MCF 10A (cell line): ENCODE measurements at regions of chr10 and their contacts with region 1.

Region 1: GRCh38 chr10:62244780-62245467 is 23.7 kb downstream of the RTKN2 start:
- DNase-seq: peak; percentile 83
- H3K4me3 Mint-ChIP-seq: peak overlapping the region; percentile 79
- H3K27ac Mint-ChIP-seq: no peak overlapping the region
- H3K4me1 Mint-ChIP-seq: peaks cover 20% of the 10 kb centered on the region
- H3K27me3 Mint-ChIP-seq: no peaks in the 10 kb centered on the region
- CTCF ChIP-seq: peak; percentile 53

Region 2: GRCh38 chr10:60816628-60817397 is 1428.1 kb before region 1 on chr10:
- CTCF ChIA-PET with region 1: no interaction called
- POLR2A ChIA-PET with region 1: no interaction called
- intact Hi-C with region 1: loop called (anchors 10 kb)
- DNase-seq: peak; percentile 81
- H3K4me3 Mint-ChIP-seq: no peak overlapping the region
- H3K27ac Mint-ChIP-seq: no peak overlapping the region
- H3K4me1 Mint-ChIP-seq: no peaks in the 10 kb centered on the region
- H3K27me3 Mint-ChIP-seq: no peaks in the 10 kb centered on the region
- CTCF ChIP-seq: peak; percentile 72

Region 3: DNA sequence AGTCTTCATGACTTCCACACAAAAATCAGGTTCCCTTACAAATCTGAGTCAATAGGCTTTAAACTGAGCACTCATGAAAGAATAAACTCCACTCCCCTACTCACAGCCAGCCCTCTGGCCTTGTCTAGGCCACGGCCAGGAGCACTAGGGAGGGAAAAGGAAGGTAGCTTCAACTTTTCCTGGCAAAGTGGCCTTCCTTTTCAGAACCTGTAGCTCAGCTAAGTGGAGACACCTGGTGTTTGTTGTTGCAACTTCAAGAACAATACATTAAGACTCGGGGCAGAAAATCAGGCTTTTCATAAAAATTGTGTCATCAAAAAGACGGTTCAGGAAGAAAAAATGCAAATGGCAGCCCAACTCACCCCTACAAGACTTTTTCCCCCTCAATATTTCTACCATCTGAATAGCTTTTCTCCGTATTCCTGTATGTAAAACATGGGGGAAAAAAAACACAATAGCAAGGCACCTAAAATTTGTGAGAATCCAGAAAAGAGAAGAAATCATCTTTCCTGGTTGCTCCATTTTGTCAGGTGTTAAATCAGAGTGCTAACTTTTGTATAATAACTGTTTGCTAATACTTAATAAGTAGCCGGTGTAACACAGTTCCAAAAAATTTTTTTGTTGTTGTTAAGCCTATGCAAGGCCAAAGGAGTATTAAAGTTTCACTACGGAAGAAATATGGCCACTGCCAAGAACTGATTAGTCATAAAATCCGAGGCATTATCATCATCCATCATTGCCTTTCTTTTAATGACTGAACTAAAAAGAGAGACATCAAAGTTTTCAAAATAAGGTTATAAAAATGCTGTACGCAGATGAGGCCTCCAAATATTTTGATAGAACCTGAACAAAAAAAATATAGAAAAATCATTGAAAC is 409.6 kb before region 1 on chr10:
- CTCF ChIA-PET with region 1: interaction called, 4 read pairs
- POLR2A ChIA-PET with region 1: no interaction called
- intact Hi-C with region 1: loop called (anchors 10 kb)
- DNase-seq: peak; percentile 70
- H3K4me3 Mint-ChIP-seq: no peak overlapping the region
- H3K27ac Mint-ChIP-seq: peak overlapping the region; percentile 83
- H3K4me1 Mint-ChIP-seq: peaks cover 31% of the 10 kb centered on the region
- H3K27me3 Mint-ChIP-seq: no peaks in the 10 kb centered on the region
- CTCF ChIP-seq: peak; percentile 50

Region 4: DNA sequence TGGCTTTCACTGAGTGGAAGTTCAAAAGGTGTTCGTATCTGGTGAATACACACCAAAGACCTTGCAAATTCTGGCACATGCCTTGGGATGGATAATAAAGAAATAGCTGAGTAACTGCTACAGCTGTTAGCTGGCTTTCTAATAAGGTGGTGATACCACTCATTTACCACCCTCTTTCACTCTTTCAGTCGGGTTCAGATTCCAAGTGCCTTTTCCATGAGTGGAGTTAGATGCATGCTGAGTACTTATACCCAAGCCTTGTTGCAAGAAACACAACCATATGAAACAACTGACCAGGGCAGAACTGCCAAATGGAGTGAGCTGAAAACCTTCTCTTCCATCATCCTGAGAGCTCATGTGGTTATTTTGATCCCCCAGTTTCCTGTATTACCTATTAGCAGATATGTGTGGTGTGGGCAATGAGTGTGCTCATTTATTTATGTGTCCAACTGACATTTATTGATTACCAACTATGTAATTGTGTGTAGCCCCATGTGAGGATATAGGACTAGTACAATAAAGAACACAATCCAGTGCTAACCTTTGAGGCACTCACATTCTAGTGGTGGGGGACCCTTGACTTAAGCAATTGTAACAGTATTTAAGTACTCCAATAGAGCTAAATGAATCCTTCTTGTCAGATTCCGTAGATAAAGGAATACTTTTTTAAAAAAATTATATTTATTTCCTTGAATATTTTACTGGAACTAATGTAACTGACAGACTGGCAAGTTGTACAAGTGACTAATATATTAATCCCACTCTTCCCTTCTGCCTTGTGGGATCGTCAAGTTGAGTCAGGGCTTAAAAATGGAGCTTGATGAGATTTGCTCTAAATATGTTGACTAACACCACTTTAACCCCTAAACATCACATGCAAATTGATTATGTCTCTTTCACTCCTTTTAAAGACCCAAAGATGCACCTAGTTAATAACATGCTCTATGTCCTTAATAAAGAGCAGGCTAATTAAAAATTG is 218.7 kb before region 1 on chr10:
- CTCF ChIA-PET with region 1: interaction called, 8 read pairs
- POLR2A ChIA-PET with region 1: interaction called, 16 read pairs
- intact Hi-C with region 1: no loop called
- DNase-seq: no peak
- H3K4me3 Mint-ChIP-seq: no peak overlapping the region
- H3K27ac Mint-ChIP-seq: peak overlapping the region; percentile 72
- H3K4me1 Mint-ChIP-seq: peaks cover 39% of the 10 kb centered on the region
- H3K27me3 Mint-ChIP-seq: no peaks in the 10 kb centered on the region
- CTCF ChIP-seq: no peak

Region 5: GRCh38 chr10:62082729-62083411 is 162.1 kb before region 1 on chr10:
- CTCF ChIA-PET with region 1: interaction called, 11 read pairs
- POLR2A ChIA-PET with region 1: interaction called, 4 read pairs
- intact Hi-C with region 1: no loop called
- DNase-seq: no peak
- H3K4me3 Mint-ChIP-seq: peak overlapping the region; percentile 42
- H3K27ac Mint-ChIP-seq: peak overlapping the region; percentile 82
- H3K4me1 Mint-ChIP-seq: peaks cover 16% of the 10 kb centered on the region
- H3K27me3 Mint-ChIP-seq: no peaks in the 10 kb centered on the region
- CTCF ChIP-seq: no peak

Region 6: GRCh38 chr10:62816331-62817120 is 571.6 kb after region 1 on chr10 and contains the start of gene EGR2:
- CTCF ChIA-PET with region 1: no interaction called
- POLR2A ChIA-PET with region 1: no interaction called
- intact Hi-C with region 1: loop called (anchors 5 kb)
- DNase-seq: peak; percentile 93
- H3K4me3 Mint-ChIP-seq: peak within 1 kb of the TSS; percentile 95
- H3K27ac Mint-ChIP-seq: peak within 1 kb of the TSS; percentile 95
- H3K4me1 Mint-ChIP-seq: peaks cover 24% of the 10 kb centered on the region
- H3K27me3 Mint-ChIP-seq: no peaks in the 10 kb centered on the region
- CTCF ChIP-seq: no peak
- total RNA-seq, gene EGR2: 0.25 and 1.0 TPM in 2 replicates